ENCODE measurements at regions of chr9 and their contacts with region 1.

Region 1: DNA sequence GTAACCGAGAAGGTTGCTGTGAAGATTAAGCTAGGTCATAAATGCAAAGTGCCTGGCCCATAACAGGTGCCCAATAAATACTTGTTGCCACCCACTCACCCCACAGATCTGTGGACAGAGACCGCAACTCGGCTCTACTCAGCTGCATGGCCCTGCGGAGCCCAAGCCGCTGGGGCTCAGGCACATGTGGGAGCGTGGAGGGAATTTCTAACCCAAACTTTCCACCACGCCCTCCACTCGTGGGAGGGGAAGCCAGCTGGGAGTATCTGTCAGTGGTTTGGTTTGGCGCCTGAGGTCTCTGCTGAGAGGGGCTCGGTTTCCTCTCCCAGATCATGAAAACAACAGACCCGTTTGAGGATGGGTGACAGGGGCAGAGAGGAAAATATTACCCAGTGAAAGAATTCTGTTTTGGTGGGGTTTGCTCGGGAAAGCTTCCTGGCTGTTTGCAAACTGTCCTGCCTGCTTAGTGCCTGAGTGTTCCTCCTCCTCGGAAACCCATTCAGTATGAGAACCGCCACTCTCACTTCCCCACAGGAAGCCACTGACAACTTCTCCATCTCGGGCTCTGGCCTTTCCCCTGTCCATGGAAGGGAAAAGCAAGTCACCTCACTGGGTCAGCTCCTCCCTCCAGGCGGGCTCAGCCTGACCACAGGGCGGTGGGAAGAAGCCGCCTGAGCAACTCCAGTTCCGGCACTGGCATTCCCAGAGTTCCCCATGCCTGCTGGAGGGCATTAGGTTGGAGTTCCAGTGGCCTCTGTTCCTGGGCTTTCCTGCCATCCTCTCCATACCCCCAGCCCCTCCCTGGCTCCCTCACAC is 60.1 kb downstream of the RGS3 start:
- DNase-seq: peak; percentile 80
- CTCF ChIP-seq: no peak

Region 2: DNA sequence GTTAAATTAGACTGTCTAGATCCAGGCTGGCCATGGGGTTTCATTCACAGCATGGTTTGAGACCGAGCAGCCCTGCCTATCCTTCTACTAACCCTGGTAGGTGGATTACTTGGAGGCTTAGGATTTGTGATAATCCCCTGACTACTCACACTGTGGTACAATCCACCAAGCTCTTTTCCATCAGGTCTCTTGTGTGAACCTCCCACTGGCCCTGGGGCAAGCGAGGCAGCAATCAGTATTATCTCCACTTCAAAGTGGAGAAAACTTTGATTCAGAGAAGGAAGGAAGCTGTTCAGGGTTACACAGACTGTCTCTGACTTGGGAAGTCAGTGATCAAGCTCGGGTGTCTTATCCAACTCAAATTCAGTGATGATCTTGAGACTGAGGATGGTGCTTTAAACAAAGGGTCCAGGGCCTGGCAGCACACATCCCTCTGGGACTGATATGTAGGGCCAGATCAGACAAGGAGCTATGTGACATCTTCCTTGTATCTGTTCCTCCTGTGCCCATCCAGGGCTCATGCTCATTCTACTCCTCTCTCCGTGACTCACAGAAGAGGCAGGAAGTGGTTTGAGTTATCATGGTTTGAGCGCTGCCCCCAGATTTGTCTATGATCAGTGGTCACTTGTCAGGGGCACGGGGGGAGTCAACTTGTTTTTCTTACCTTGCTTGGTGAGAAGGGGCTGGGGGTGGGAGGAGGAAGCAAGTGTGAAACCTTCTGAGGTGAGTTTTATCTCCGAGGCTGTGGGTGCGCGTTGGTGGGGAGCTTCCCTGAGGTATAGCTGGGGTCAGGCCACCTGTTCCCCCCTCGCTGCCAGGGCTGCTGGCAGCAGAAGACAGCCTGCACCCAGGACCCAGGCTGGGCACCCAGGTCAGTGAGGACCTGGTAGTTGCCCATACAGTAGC is 11.5 kb before region 1 on chr9:
- CTCF ChIA-PET with region 1: interaction called, 40 read pairs
- POLR2A ChIA-PET with region 1: no interaction called
- DNase-seq: peak; percentile 81
- CTCF ChIP-seq: no peak

Region 3: GRCh38 chr9:113695901-113696300 is 172.3 kb after region 1 on chr9:
- CTCF ChIA-PET with region 1: no interaction called
- POLR2A ChIA-PET with region 1: no interaction called
- DNase-seq: no peak
- CTCF ChIP-seq: no peak